Panc1 (cell line): ENCODE measurements at regions of chr5 and their contacts with region 1.

Region 1: GRCh38 chr5:146533260-146533857 is 17.4 kb upstream of the GPR151 start:
- DNase-seq: peak; percentile 52
- ATAC-seq: peak; percentile 93
- H3K4me3 ChIP-seq: no peak overlapping the region
- H3K27ac ChIP-seq: no peak overlapping the region
- H3K4me1 ChIP-seq: no peaks in the 10 kb centered on the region
- H3K27me3 ChIP-seq: no peaks in the 10 kb centered on the region
- CTCF ChIP-seq: peak; percentile 93

Region 2: GRCh38 chr5:146516151-146516475 is 17.2 kb before region 1 on chr5 and contains the start of gene GPR151:
- CTCF ChIA-PET with region 1: no interaction called
- POLR2A ChIA-PET with region 1: no interaction called
- in situ Hi-C with region 1: no loop called
- intact Hi-C with region 1: no loop called
- DNase-seq: no peak
- ATAC-seq: peak; percentile 44; the same call in 1 of the 2 replicates
- H3K4me3 ChIP-seq: no peak within 1 kb of the TSS
- H3K27ac ChIP-seq: no peak within 1 kb of the TSS
- H3K4me1 ChIP-seq: no peaks in the 10 kb centered on the region
- H3K27me3 ChIP-seq: peaks cover 2% of the 10 kb centered on the region; the same call in 1 of the 2 replicates
- CTCF ChIP-seq: no peak
- total RNA-seq, gene GPR151: not detected

Region 3: GRCh38 chr5:147188200-147189108 is 655.1 kb after region 1 on chr5:
- CTCF ChIA-PET with region 1: interaction called, 7 read pairs
- POLR2A ChIA-PET with region 1: no interaction called
- in situ Hi-C with region 1: no loop called
- intact Hi-C with region 1: loop called (anchors 2 kb)
- DNase-seq: peak; percentile 51
- ATAC-seq: peak; percentile 94
- H3K4me3 ChIP-seq: peak overlapping the region; percentile 11 to 55; a peak in 3 of 4 replicates
- H3K27ac ChIP-seq: no peak overlapping the region
- H3K4me1 ChIP-seq: no peaks in the 10 kb centered on the region
- H3K27me3 ChIP-seq: no peaks in the 10 kb centered on the region; the same call in 1 of the 2 replicates
- CTCF ChIP-seq: peak; percentile 79

Region 4: GRCh38 chr5:147369742-147370374 is 836.5 kb after region 1 on chr5:
- CTCF ChIA-PET with region 1: no interaction called
- POLR2A ChIA-PET with region 1: no interaction called
- in situ Hi-C with region 1: loop called (anchors 25 kb)
- intact Hi-C with region 1: loop called (anchors 10 kb)
- DNase-seq: no peak
- ATAC-seq: no peak
- H3K4me3 ChIP-seq: no peak overlapping the region
- H3K27ac ChIP-seq: no peak overlapping the region
- H3K4me1 ChIP-seq: no peaks in the 10 kb centered on the region
- H3K27me3 ChIP-seq: no peaks in the 10 kb centered on the region
- CTCF ChIP-seq: peak; percentile 68; the same call in 1 of the 2 replicates